ENCODE measurements at regions of chr3 and their contacts with region 1.

Region 1: DNA sequence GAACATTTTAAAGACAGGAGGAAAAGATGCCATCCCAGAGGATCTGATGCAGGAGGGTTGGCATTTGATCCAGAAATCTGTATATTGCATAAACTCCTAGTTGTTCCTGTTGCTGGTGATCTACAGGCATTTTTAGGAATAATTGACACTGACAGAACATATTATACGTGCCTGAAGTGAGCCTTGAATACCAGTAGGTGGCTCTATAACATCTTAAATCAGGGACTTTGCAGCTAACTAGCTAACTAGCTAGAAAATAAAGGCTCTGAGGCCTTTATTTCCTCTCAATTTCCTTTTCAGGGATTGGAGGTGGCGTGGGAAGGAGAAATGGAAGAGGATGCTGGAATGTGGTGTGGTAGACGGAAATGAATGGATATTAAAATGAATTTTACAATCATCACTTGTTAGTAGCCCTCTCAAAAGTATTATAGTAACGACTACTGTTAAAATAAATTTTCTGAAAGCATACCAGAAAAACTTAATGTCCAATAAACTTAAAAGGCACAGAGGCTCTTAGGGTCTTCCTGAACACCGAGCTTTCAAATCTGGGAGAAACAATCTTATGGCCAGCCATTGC is 73.9 kb upstream of the ZBED2 start:
- DNase-seq: no peak
- ATAC-seq: peak; percentile 40
- H3K4me3 Mint-ChIP-seq: no peak overlapping the region
- H3K27ac Mint-ChIP-seq: peak overlapping the region; percentile 75
- H3K4me1 Mint-ChIP-seq: peaks cover 84% of the 10 kb centered on the region
- H3K27me3 Mint-ChIP-seq: no peaks in the 10 kb centered on the region

Region 2: GRCh38 chr3:111627092-111627491 is 41.9 kb before region 1 on chr3:
- CTCF ChIA-PET with region 1: no interaction called
- DNase-seq: no peak
- ATAC-seq: no peak
- H3K4me3 Mint-ChIP-seq: no peak overlapping the region
- H3K27ac Mint-ChIP-seq: no peak overlapping the region
- H3K4me1 Mint-ChIP-seq: peaks cover 15% of the 10 kb centered on the region
- H3K27me3 Mint-ChIP-seq: no peaks in the 10 kb centered on the region

Region 3: DNA sequence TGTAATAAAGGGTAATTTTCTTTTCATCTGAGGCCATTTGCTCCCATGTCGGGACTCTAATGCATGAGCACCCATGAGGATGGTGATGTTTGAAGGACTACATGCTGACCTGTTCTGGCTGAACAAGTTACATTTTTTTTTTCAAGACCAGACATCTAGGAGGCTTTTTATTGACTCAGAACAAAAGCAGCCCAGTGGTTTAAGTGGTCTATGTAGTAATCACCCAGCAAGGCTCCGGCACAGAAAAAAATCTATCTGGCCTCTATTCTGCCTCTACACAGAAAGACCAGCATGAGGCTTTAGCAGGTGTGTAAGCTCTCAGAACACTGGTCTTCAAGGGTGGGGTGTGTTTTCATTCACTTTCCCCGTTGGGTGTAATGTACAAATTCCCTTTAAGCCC is 21.2 kb after region 1 on chr3:
- CTCF ChIA-PET with region 1: no interaction called
- DNase-seq: peak; percentile 77
- ATAC-seq: peak; percentile 91
- H3K4me3 Mint-ChIP-seq: peak overlapping the region; percentile 3
- H3K27ac Mint-ChIP-seq: peak overlapping the region; percentile 69
- H3K4me1 Mint-ChIP-seq: peaks cover 69% of the 10 kb centered on the region
- H3K27me3 Mint-ChIP-seq: no peaks in the 10 kb centered on the region

Region 4: GRCh38 chr3:111712294-111713167 is 43.5 kb after region 1 on chr3:
- CTCF ChIA-PET with region 1: interaction called, 11 read pairs
- DNase-seq: peak; percentile 79
- ATAC-seq: peak; percentile 93
- H3K4me3 Mint-ChIP-seq: peak overlapping the region; percentile 31
- H3K27ac Mint-ChIP-seq: peak overlapping the region; percentile 86
- H3K4me1 Mint-ChIP-seq: peaks cover 27% of the 10 kb centered on the region
- H3K27me3 Mint-ChIP-seq: no peaks in the 10 kb centered on the region

Measured in activated CD8-positive, alpha-beta memory T cell treated with anti-CD3 and anti-CD28 coated beads, Interleukin-2, amount 10 ng/mL, durations not matched to agents 7 days and 5 days (primary cell).